PC-3 (cell line): ENCODE measurements at regions of chr18 and their contacts with region 1.

Region 1: DNA sequence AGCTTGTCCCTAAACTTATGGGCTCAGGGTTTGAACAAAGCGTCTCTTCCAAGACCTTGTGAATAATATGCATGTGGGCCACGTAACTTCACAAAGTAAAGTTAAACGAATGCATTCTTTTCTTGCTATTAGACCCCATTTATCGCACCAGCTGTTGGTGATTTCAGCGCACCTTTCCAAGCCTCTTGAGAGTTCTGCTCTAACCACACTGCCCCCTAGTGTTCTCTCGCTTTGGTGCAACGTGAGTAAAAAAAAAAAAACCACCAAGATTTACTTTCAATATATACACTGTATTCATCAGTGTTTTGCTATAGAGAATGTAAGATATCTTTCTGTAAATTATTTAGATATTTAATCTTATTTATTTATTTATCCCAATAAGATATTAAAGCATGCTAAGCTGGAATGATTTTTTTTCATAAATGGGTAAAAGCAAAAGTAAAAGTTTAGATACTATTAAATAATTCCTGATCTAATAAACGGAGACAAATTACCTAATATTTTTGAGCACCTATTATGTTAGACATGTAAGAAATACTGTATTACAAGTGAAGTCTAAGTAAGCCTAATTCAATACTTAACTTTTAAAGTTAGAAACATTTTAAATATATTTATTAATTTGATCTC is 459.5 kb downstream of the DLGAP1 start:
- DNase-seq: peak; percentile 69
- ATAC-seq: 0 out of 2 replicates have a peak, but pooled peaks have one; percentile 20
- H3K4me3 ChIP-seq: no peak overlapping the region
- H3K27ac ChIP-seq: no peak overlapping the region
- H3K4me1 ChIP-seq: no peaks in the 10 kb centered on the region
- H3K27me3 ChIP-seq: no peaks in the 10 kb centered on the region
- CTCF ChIP-seq: peak; percentile 85

Region 2: GRCh38 chr18:3281456-3282400 is 713.9 kb before region 1 on chr18:
- CTCF ChIA-PET with region 1: no interaction called
- POLR2A ChIA-PET with region 1: no interaction called
- intact Hi-C with region 1: loop called (anchors 1 kb)
- DNase-seq: peak; percentile 96
- ATAC-seq: peak; percentile 64
- H3K4me3 ChIP-seq: no peak overlapping the region
- H3K27ac ChIP-seq: no peak overlapping the region
- H3K4me1 ChIP-seq: peaks cover 27% of the 10 kb centered on the region
- H3K27me3 ChIP-seq: no peaks in the 10 kb centered on the region
- CTCF ChIP-seq: peak; percentile 87

Region 3: GRCh38 chr18:3703732-3704176 is 291.8 kb before region 1 on chr18:
- CTCF ChIA-PET with region 1: no interaction called
- POLR2A ChIA-PET with region 1: no interaction called
- intact Hi-C with region 1: loop called (anchors 1 kb)
- DNase-seq: peak; percentile 71
- ATAC-seq: peak; percentile 92
- H3K4me3 ChIP-seq: no peak overlapping the region
- H3K27ac ChIP-seq: no peak overlapping the region
- H3K4me1 ChIP-seq: no peaks in the 10 kb centered on the region
- H3K27me3 ChIP-seq: peaks cover 21% of the 10 kb centered on the region
- CTCF ChIP-seq: peak; percentile 92

Region 4: DNA sequence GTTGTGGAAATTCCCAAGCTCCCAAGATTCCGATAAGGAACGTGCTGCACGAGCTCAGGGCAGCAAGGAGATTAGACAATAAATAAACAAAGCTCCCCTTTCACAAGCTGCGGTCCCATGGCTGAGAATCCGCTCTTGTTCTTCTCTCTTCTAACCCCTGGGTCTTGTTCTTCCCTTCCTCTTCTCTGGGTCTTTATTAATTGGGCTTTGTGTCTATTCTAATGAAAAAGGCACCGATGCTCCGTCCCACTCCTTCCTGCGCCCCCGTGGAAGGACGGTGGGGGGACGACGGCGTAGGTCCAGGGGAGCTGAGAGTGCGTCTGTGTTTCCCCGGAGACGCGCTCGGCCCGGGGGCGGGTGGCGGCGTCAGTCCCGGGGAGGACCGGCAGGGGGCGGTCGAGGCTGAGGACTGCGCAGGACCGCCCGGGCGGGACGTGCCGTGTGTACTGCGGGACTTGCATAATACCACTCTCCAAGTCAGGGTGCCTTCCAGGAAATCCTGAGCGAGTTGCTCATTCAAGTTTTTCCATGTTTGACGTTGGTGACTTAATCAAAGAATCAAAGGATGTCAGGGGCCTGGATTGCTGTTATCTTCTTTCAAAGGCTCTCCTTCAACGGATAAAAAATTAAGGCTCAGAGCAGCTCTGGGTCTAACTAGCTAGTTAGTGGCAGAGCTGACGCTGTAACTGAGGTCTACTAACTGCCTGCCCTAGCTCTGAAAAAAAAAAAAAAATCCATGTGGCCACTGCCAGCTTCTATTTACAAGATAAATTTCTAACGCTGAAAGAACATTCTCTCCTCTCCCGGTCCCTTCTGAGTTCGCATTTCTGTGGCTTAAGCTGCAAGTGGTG is 224.2 kb before region 1 on chr18:
- CTCF ChIA-PET with region 1: no interaction called
- POLR2A ChIA-PET with region 1: no interaction called
- intact Hi-C with region 1: loop called (anchors 1 kb)
- DNase-seq: peak; percentile 80
- ATAC-seq: peak; percentile 95
- H3K4me3 ChIP-seq: peak overlapping the region; percentile 49
- H3K27ac ChIP-seq: no peak overlapping the region
- H3K4me1 ChIP-seq: peaks cover 21% of the 10 kb centered on the region
- H3K27me3 ChIP-seq: peaks cover 27% of the 10 kb centered on the region; the same call in 1 of the 2 replicates
- CTCF ChIP-seq: peak; percentile 88

Region 5: DNA sequence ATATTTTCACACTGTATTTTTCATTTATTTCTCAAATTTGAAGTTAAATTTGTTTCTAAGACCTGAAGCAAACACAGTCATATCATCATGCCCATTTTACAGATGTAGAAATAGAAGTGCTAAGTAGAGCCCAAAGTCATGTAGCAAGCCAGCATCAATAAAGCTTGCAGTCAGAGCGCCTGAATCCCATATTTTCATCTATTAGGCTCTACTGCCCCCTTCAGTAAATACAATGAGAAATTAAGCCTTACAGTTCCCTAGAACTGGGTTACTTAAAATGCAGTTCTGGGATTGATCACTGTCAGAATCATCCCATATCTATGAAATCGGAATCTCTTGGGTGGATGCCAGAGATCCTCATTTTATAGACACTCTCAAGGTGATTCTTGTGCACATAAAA is 125.7 kb before region 1 on chr18:
- CTCF ChIA-PET with region 1: no interaction called
- POLR2A ChIA-PET with region 1: no interaction called
- intact Hi-C with region 1: loop called (anchors 2 kb)
- DNase-seq: peak; percentile 72
- ATAC-seq: peak; percentile 74
- H3K4me3 ChIP-seq: no peak overlapping the region
- H3K27ac ChIP-seq: no peak overlapping the region
- H3K4me1 ChIP-seq: no peaks in the 10 kb centered on the region
- H3K27me3 ChIP-seq: peaks cover 48% of the 10 kb centered on the region
- CTCF ChIP-seq: peak; percentile 76

Region 6: DNA sequence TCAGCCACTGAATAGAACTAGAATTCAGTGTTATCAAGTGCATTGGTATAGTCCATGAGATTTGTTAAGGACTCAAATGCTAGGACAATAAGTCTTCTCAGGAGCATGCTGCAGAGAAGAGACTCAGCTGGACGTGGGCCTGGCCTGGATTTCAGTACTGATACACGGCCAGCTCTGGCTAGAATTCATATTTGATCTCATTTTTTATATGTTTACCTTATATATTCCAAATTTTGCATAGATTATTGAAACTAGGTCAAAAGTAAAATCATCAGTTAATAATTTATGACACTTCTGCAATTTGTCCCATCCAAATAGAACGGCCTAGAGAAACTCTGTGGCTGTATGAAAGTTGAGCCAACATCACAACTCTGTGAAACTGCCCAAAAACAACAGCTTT is 197.5 kb after region 1 on chr18:
- CTCF ChIA-PET with region 1: no interaction called
- POLR2A ChIA-PET with region 1: no interaction called
- intact Hi-C with region 1: no loop called
- DNase-seq: no peak
- ATAC-seq: no peak
- H3K4me3 ChIP-seq: no peak overlapping the region
- H3K27ac ChIP-seq: no peak overlapping the region
- H3K4me1 ChIP-seq: no peaks in the 10 kb centered on the region
- H3K27me3 ChIP-seq: no peaks in the 10 kb centered on the region
- CTCF ChIP-seq: no peak

Region 7: DNA sequence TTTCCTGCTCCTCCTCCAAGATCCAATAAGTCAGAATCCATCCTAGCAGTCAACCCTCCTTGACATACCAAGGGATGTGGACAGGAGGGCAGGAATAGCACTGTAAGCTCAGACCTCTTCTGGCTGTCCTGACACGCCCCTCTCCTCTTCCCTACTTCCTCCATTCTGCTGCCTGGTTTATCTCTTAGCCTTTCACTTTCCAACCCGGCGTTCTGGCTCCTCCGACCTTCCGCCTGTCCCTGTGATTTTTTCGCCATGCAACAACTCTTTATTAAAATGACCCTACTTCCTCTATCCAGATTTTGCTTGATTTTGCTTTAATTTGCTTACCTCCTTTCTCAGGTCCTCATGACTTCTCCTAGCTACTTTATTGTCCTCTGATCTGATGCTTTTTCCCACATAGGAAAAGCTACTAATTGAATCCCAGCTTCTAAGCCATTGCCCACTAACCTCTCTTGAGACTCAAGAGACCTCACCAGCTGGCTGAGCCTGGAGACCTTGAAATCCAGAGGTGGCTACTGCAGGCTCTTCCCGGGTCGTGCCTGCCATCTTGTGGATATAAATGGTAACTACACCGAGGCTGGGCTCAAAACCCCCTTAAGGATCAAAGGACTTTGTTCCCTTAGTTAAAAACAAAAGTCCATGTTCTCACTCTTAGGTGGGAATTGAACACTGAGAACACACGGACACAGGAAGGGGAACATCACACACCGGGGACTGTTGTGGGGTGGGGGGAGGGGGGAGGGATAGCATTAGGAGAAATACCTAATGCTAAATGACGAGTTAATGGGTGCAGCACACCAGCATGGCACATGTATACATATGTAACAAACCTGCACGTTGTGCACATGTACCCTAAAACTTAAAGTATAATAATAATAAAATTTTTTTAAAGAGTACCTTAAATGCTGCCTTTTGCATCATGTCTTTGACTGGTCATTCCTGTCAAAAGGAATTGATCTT is 1062.1 kb after region 1 on chr18:
- CTCF ChIA-PET with region 1: no interaction called
- POLR2A ChIA-PET with region 1: no interaction called
- intact Hi-C with region 1: loop called (anchors 5 kb)
- DNase-seq: peak; percentile 64
- ATAC-seq: peak; percentile 73
- H3K4me3 ChIP-seq: no peak overlapping the region
- H3K27ac ChIP-seq: no peak overlapping the region
- H3K4me1 ChIP-seq: no peaks in the 10 kb centered on the region
- H3K27me3 ChIP-seq: peaks cover 9% of the 10 kb centered on the region
- CTCF ChIP-seq: peak; percentile 81